PC-9 (cell line): ENCODE measurements at regions of chr5 and their contacts with region 1.

Region 1: GRCh38 chr5:178859625-178860531 is at the start of gene ZNF354B:
- DNase-seq: peak; percentile 83 to 85
- H3K4me3 ChIP-seq: peak within 1 kb of the TSS; percentile 76
- H3K27ac ChIP-seq: no peak within 1 kb of the TSS
- H3K4me1 ChIP-seq: peaks cover 9% of the 10 kb centered on the region; the same call in 1 of the 2 replicates
- H3K27me3 ChIP-seq: no peaks in the 10 kb centered on the region
- CTCF ChIP-seq: peak; percentile 44; the same call in 1 of the 2 replicates
- total RNA-seq, gene ZNF354B: 10.6 and 11.2 TPM in 2 replicates

Region 2: GRCh38 chr5:178786859-178787760 is 72.8 kb before region 1 on chr5:
- CTCF ChIA-PET with region 1: no interaction called
- POLR2A ChIA-PET with region 1: interaction called, 7 read pairs
- intact Hi-C with region 1: loop called (anchors 2 kb)
- DNase-seq: peak; percentile 68 to 95
- H3K4me3 ChIP-seq: no peak overlapping the region; the same call in 1 of the 2 replicates
- H3K27ac ChIP-seq: peak overlapping the region; percentile 23; the same call in 1 of the 2 replicates
- H3K4me1 ChIP-seq: peaks cover 23% of the 10 kb centered on the region
- H3K27me3 ChIP-seq: no peaks in the 10 kb centered on the region
- CTCF ChIP-seq: no peak; the same call in 1 of the 2 replicates

Region 3: GRCh38 chr5:178895651-178896571 is 36.0 kb after region 1 on chr5 and contains the start of gene ZFP2:
- CTCF ChIA-PET with region 1: no interaction called
- POLR2A ChIA-PET with region 1: no interaction called
- intact Hi-C with region 1: loop called (anchors 1 kb)
- DNase-seq: peak in 1 of 2 experiments; percentile 57
- H3K4me3 ChIP-seq: peak within 1 kb of the TSS; percentile 79
- H3K27ac ChIP-seq: no peak within 1 kb of the TSS
- H3K4me1 ChIP-seq: no peaks in the 10 kb centered on the region
- H3K27me3 ChIP-seq: 0 out of 2 replicates have a peak, but pooled peaks cover 6% of the 10 kb centered on the region
- CTCF ChIP-seq: no peak
- total RNA-seq, gene ZFP2: not detected in 2 replicates